Left ventricle myocardium superior (tissue), 1 donor: ENCODE measurements at regions of chr10 and their contacts with region 1.

Region 1: GRCh38 chr10:76514869-76515268 is 1083.4 kb downstream of the LRMDA start:
- DNase-seq: no peak
- ATAC-seq: no peak

Region 2: DNA sequence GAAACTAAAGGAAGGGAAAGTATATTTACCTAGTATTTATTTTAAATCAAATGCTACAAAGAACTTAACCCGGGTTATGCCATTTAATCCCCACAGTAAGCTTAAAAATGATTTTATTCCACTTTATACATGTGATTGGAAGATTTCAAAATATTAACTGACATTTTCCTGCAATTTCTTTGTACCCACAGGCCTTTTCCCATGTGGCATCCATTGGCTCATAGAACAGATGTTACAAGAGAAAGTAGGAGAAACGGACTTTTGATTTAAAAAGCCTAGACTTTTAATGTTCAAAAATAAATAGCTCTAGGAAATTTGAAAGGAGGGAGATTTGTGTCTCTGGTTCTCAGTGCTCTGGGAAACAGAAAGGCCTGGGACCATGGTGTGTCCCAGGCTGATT is 314.9 kb after region 1 on chr10:
- intact Hi-C with region 1: loop called (anchors 5 kb)
- DNase-seq: no peak
- ATAC-seq: no peak